WTC11 (cell line): ENCODE measurements at regions of chr1 and their contacts with region 1.

Region 1: GRCh38 chr1:26284597-26285360 is 4.9 kb downstream of the SH3BGRL3 start:
- DNase-seq: peak; percentile 86
- ATAC-seq: peak; percentile 54
- H3K4me3 Mint-ChIP-seq: no peak overlapping the region
- H3K27ac Mint-ChIP-seq: peak overlapping the region; percentile 81
- H3K4me1 Mint-ChIP-seq: peaks cover 37% of the 10 kb centered on the region
- H3K27me3 Mint-ChIP-seq: no peaks in the 10 kb centered on the region; the same call in 1 of the 2 replicates
- CTCF ChIP-seq: peak; percentile 86

Region 2: GRCh38 chr1:26190373-26190987 is 94.3 kb before region 1 on chr1 and contains the start of gene CATSPER4:
- CTCF ChIA-PET with region 1: interaction called, 17 read pairs
- POLR2A ChIA-PET with region 1: interaction called, 6 read pairs
- DNase-seq: peak; percentile 79
- ATAC-seq: peak; percentile 97
- H3K4me3 Mint-ChIP-seq: no peak within 1 kb of the TSS
- H3K27ac Mint-ChIP-seq: peak within 1 kb of the TSS; percentile 55; the same call in 1 of the 2 replicates
- H3K4me1 Mint-ChIP-seq: peaks cover 17% of the 10 kb centered on the region
- H3K27me3 Mint-ChIP-seq: no peaks in the 10 kb centered on the region; the same call in 1 of the 2 replicates
- CTCF ChIP-seq: 0 out of 2 replicates have a peak, but pooled peaks have one; percentile 20
- total RNA-seq, gene CATSPER4: 0.35 to 0.85 TPM (median 0.55 TPM) in 3 replicates

Region 3: GRCh38 chr1:26306290-26307229 is 21.8 kb after region 1 on chr1 and contains the start of gene UBXN11:
- CTCF ChIA-PET with region 1: interaction called, 42 read pairs
- POLR2A ChIA-PET with region 1: no interaction called
- DNase-seq: peak; percentile 94
- ATAC-seq: peak; percentile 100
- H3K4me3 Mint-ChIP-seq: peak within 1 kb of the TSS; percentile 99
- H3K27ac Mint-ChIP-seq: peak within 1 kb of the TSS; percentile 96
- H3K4me1 Mint-ChIP-seq: peaks cover 23% of the 10 kb centered on the region
- H3K27me3 Mint-ChIP-seq: no peaks in the 10 kb centered on the region
- CTCF ChIP-seq: no peak
- total RNA-seq, gene UBXN11: 12.4 to 14.1 TPM (median 14.1 TPM) in 3 replicates

Region 4: GRCh38 chr1:26336477-26337205 is 51.9 kb after region 1 on chr1:
- CTCF ChIA-PET with region 1: interaction called, 18 read pairs
- POLR2A ChIA-PET with region 1: interaction called, 3 read pairs
- DNase-seq: peak; percentile 97
- ATAC-seq: peak; percentile 92
- H3K4me3 Mint-ChIP-seq: peak overlapping the region; percentile 96
- H3K27ac Mint-ChIP-seq: no peak overlapping the region
- H3K4me1 Mint-ChIP-seq: peaks cover 28% of the 10 kb centered on the region
- H3K27me3 Mint-ChIP-seq: peaks cover 8% of the 10 kb centered on the region
- CTCF ChIP-seq: no peak

Region 5: DNA sequence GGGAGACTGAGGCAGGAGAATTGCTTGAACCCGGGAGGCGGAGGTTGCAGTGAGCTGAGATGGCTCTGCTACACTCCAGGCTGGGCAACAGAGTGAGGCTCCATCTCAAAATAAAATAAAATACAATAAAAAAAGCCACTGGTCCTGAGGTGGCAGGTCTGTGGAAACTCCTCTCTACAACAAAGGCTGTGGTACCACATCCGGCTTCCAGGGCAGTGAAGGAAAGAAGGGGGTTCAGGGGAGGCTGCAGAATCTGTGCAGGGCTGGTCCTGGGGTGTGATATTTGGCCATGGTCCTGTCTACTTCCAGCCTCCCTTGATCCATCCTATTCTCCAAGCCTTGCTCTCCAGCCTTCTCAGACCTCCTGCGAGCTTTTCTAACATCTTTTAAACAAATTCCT is 88.5 kb after region 1 on chr1:
- CTCF ChIA-PET with region 1: interaction called, 12 read pairs
- POLR2A ChIA-PET with region 1: no interaction called
- DNase-seq: no peak
- ATAC-seq: no peak
- H3K4me3 Mint-ChIP-seq: no peak overlapping the region
- H3K27ac Mint-ChIP-seq: no peak overlapping the region
- H3K4me1 Mint-ChIP-seq: peaks cover 19% of the 10 kb centered on the region
- H3K27me3 Mint-ChIP-seq: peaks cover 7% of the 10 kb centered on the region
- CTCF ChIP-seq: no peak

Region 6: DNA sequence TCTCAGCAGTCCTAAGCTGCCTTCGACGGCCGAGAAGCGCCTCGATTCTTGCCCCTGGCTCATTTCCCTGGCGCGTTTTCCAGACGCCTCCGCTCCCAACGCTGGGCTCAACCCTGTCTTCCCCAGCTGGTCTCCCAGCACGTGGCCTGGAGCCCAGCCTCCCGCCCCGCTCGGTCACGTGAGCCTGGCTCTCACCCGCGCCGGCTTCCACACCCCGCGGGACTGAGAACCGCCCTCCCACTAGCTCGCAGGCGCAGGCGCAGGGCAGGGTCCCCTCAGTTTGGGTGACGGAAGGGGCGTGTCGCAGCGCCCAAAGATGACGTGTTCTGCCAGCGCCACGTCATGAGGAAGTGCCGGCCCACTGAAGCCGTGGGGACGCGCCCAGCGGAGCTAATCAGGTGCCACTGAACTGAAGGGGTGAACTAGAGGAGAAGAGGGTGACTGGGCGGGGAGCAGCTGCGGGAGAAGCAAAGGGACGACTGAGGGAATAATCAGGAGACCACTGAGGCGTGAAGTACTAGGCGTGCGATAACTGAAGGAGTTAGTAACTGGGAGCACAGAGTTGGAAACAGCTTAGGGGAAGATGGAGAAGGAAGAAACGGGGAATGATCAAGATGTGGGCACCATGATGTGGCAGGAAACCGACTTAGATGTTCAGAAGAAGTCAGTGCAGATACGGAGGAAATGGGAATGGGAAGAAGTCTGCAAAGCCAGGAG is 147.4 kb after region 1 on chr1 and contains the start of gene DHDDS:
- CTCF ChIA-PET with region 1: interaction called, 14 read pairs
- POLR2A ChIA-PET with region 1: interaction called, 3 read pairs
- DNase-seq: peak; percentile 97
- ATAC-seq: peak; percentile 87
- H3K4me3 Mint-ChIP-seq: peak within 1 kb of the TSS; percentile 96
- H3K27ac Mint-ChIP-seq: peak within 1 kb of the TSS; percentile 97
- H3K4me1 Mint-ChIP-seq: peaks cover 44% of the 10 kb centered on the region
- H3K27me3 Mint-ChIP-seq: no peaks in the 10 kb centered on the region
- CTCF ChIP-seq: no peak
- total RNA-seq, gene DHDDS: 44.9 to 55.4 TPM (median 47.1 TPM) in 3 replicates